ENCODE measurements at regions of chrX and their contacts with region 1.

Region 1: GRCh38 chrX:130916636-130917422 is 13.8 kb upstream of the ENOX2 start:
- DNase-seq: peak; percentile 4 to 75 (median 18)
- ATAC-seq: peak; percentile 56
- H3K4me3 ChIP-seq: no peak overlapping the region
- H3K4me3 Mint-ChIP-seq: no peak overlapping the region
- H3K27ac ChIP-seq: no peak overlapping the region
- H3K27ac Mint-ChIP-seq: no peak overlapping the region
- H3K4me1 ChIP-seq: no peaks in the 10 kb centered on the region
- H3K4me1 Mint-ChIP-seq: no peaks in the 10 kb centered on the region
- H3K27me3 ChIP-seq: no peaks in the 10 kb centered on the region
- H3K27me3 Mint-ChIP-seq: peaks cover 4% of the 10 kb centered on the region
- CTCF ChIP-seq: peak; percentile 57

Region 2: DNA sequence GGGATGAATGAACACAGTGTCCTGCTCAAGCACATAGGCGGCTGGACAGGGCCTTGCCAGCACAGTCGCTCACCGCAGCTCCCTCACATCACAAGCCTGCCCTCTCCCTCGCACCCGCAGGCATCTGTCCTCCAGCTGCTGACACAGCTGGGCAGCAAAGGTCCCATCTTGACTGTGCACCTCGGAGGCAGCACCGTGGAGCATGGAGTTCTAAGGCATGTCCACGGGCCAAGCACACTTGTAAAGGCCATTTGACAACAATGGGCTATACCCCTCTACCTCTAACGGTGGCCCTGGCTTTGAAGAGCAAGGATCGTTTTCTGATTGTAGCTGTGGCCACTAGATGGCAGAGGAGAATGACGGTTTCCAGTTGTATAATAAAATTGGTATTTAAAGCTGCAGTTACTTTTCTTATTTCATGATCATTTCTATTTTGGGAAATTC is 1315.8 kb before region 1 on chrX:
- CTCF ChIA-PET with region 1: no interaction called
- POLR2A ChIA-PET with region 1: no interaction called
- intact Hi-C with region 1: loop called (anchors 2 to 10 kb)
- DNase-seq: peak in 5 of 14 experiments; percentile 5 to 54 (median 34)
- ATAC-seq: peak; percentile 33
- H3K4me3 ChIP-seq: no peak overlapping the region
- H3K4me3 Mint-ChIP-seq: no peak overlapping the region
- H3K27ac ChIP-seq: no peak overlapping the region
- H3K27ac Mint-ChIP-seq: no peak overlapping the region
- H3K4me1 ChIP-seq: peaks cover 22% of the 10 kb centered on the region
- H3K4me1 Mint-ChIP-seq: peaks cover 29% of the 10 kb centered on the region
- H3K27me3 ChIP-seq: no peaks in the 10 kb centered on the region
- H3K27me3 Mint-ChIP-seq: no peaks in the 10 kb centered on the region
- CTCF ChIP-seq: peak; percentile 51

Region 3: GRCh38 chrX:130330706-130331105 is 586.1 kb before region 1 on chrX:
- CTCF ChIA-PET with region 1: no interaction called
- POLR2A ChIA-PET with region 1: no interaction called
- intact Hi-C with region 1: loop called in 1 of 2 experiments (anchors 5 kb)
- DNase-seq: peak; percentile 2 to 58 (median 16)
- ATAC-seq: peak; percentile 32
- H3K4me3 ChIP-seq: no peak overlapping the region
- H3K4me3 Mint-ChIP-seq: no peak overlapping the region
- H3K27ac ChIP-seq: no peak overlapping the region
- H3K27ac Mint-ChIP-seq: no peak overlapping the region
- H3K4me1 ChIP-seq: no peaks in the 10 kb centered on the region
- H3K4me1 Mint-ChIP-seq: no peaks in the 10 kb centered on the region
- H3K27me3 ChIP-seq: peaks cover 7 to 15% of the 10 kb centered on the region in 2 experiments
- H3K27me3 Mint-ChIP-seq: peaks cover 21% of the 10 kb centered on the region
- CTCF ChIP-seq: peak; percentile 15

Region 4: GRCh38 chrX:130539721-130540321 is 377.0 kb before region 1 on chrX:
- CTCF ChIA-PET with region 1: interaction called, 3 read pairs
- POLR2A ChIA-PET with region 1: no interaction called
- intact Hi-C with region 1: loop called (anchors 1 to 5 kb)
- DNase-seq: peak in 9 of 14 experiments; percentile 7 to 45 (median 22)
- ATAC-seq: no peak
- H3K4me3 ChIP-seq: no peak overlapping the region
- H3K4me3 Mint-ChIP-seq: no peak overlapping the region
- H3K27ac ChIP-seq: no peak overlapping the region
- H3K27ac Mint-ChIP-seq: no peak overlapping the region
- H3K4me1 ChIP-seq: no peaks in the 10 kb centered on the region
- H3K4me1 Mint-ChIP-seq: no peaks in the 10 kb centered on the region
- H3K27me3 ChIP-seq: no peaks in the 10 kb centered on the region
- H3K27me3 Mint-ChIP-seq: no peaks in the 10 kb centered on the region
- CTCF ChIP-seq: peak; percentile 20

Region 5: DNA sequence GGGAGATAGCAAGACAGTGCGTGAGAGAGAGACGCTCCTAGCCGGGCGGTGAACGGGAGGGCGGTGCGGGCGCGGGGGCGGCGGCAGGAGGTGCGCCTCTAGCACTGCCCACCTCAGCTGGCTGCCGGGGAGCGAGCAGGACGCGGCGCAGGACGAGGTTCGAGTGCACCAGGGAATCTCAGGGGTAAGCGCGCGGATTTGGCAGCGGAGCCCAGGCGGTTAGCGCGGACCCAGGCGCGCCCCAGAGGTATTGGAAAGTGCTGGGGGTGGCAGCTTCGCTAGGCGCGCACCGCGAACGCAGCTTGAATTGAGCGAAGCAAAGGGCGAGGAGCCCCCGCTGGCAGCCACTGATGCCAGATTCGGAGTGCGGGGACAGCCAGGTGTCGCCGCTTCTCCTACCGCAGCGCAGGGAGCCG is 165.5 kb after region 1 on chrX:
- CTCF ChIA-PET with region 1: no interaction called
- POLR2A ChIA-PET with region 1: no interaction called
- intact Hi-C with region 1: no loop called
- DNase-seq: no peak
- ATAC-seq: no peak
- H3K4me3 ChIP-seq: no peak overlapping the region
- H3K4me3 Mint-ChIP-seq: no peak overlapping the region
- H3K27ac ChIP-seq: no peak overlapping the region
- H3K27ac Mint-ChIP-seq: no peak overlapping the region
- H3K4me1 ChIP-seq: no peaks in the 10 kb centered on the region
- H3K4me1 Mint-ChIP-seq: no peaks in the 10 kb centered on the region
- H3K27me3 ChIP-seq: peaks cover 9 to 29% of the 10 kb centered on the region in 2 experiments
- H3K27me3 Mint-ChIP-seq: peaks cover 48% of the 10 kb centered on the region
- CTCF ChIP-seq: no peak

Measured in CD4-positive, alpha-beta T cell (primary cell).